H1 (cell line): ENCODE measurements at regions of chr6 and their contacts with region 1.

Region 1: GRCh38 chr6:3732345-3733141 is 19.0 kb downstream of the PXDC1 start:
- DNase-seq: peak in 1 of 2 experiments; percentile 85
- H3K4me3 ChIP-seq: no peak overlapping the region
- H3K27ac ChIP-seq: no peak overlapping the region
- H3K4me1 ChIP-seq: peaks cover 0 to 4% (median 2%) of the 10 kb centered on the region in 4 experiments; a peak in 4 of 7 replicates
- H3K27me3 ChIP-seq: no peaks in the 10 kb centered on the region
- CTCF ChIP-seq: peak; percentile 78 to 96 (median 88)
- EP300 ChIP-seq: no peak
- POLR2A ChIP-seq: no peak
- RAD21 ChIP-seq: peak; percentile 99 to 100

Region 2: GRCh38 chr6:3281631-3282475 is 450.7 kb before region 1 on chr6:
- CTCF ChIA-PET with region 1: interaction called, 58 read pairs
- POLR2A ChIA-PET with region 1: no interaction called
- DNase-seq: peak in 1 of 2 experiments; percentile 21
- H3K4me3 ChIP-seq: peak overlapping the region in 1 of 4 experiments; percentile 12; a peak in 3 of 8 replicates
- H3K27ac ChIP-seq: no peak overlapping the region
- H3K4me1 ChIP-seq: peaks cover 11 to 15% (median 15%) of the 10 kb centered on the region in 4 experiments
- H3K27me3 ChIP-seq: no peaks in the 10 kb centered on the region
- CTCF ChIP-seq: no peak
- EP300 ChIP-seq: no peak
- POLR2A ChIP-seq: no peak
- RAD21 ChIP-seq: no peak

Region 3: GRCh38 chr6:3410385-3411360 is 321.9 kb before region 1 on chr6:
- CTCF ChIA-PET with region 1: interaction called, 23 read pairs
- POLR2A ChIA-PET with region 1: no interaction called
- DNase-seq: peak in 1 of 2 experiments; percentile 92
- H3K4me3 ChIP-seq: no peak overlapping the region
- H3K27ac ChIP-seq: no peak overlapping the region
- H3K4me1 ChIP-seq: peaks cover 0 to 19% (median 16%) of the 10 kb centered on the region in 4 experiments; a peak in 6 of 7 replicates
- H3K27me3 ChIP-seq: no peaks in the 10 kb centered on the region
- CTCF ChIP-seq: peak; percentile 84 to 95 (median 84)
- EP300 ChIP-seq: no peak
- POLR2A ChIP-seq: no peak
- RAD21 ChIP-seq: peak; percentile 83 to 88

Region 4: GRCh38 chr6:3623451-3624249 is 108.9 kb before region 1 on chr6:
- CTCF ChIA-PET with region 1: interaction called, 11 read pairs
- POLR2A ChIA-PET with region 1: no interaction called
- DNase-seq: peak in 1 of 2 experiments; percentile 42
- H3K4me3 ChIP-seq: no peak overlapping the region
- H3K27ac ChIP-seq: no peak overlapping the region
- H3K4me1 ChIP-seq: peaks cover 2 to 15% (median 10%) of the 10 kb centered on the region in 4 experiments
- H3K27me3 ChIP-seq: peaks cover 0 to 2% (median 0%) of the 10 kb centered on the region in 4 experiments; a peak in 2 of 7 replicates
- CTCF ChIP-seq: no peak
- EP300 ChIP-seq: no peak
- POLR2A ChIP-seq: no peak
- RAD21 ChIP-seq: no peak

Region 5: GRCh38 chr6:3721810-3722626 is 10.5 kb before region 1 on chr6:
- CTCF ChIA-PET with region 1: interaction called, 17 read pairs
- POLR2A ChIA-PET with region 1: interaction called, 3 read pairs
- DNase-seq: no peak
- H3K4me3 ChIP-seq: no peak overlapping the region
- H3K27ac ChIP-seq: no peak overlapping the region
- H3K4me1 ChIP-seq: peaks cover 0 to 12% (median 4%) of the 10 kb centered on the region in 4 experiments; a peak in 6 of 7 replicates
- H3K27me3 ChIP-seq: no peaks in the 10 kb centered on the region
- CTCF ChIP-seq: no peak
- EP300 ChIP-seq: no peak
- POLR2A ChIP-seq: no peak
- RAD21 ChIP-seq: no peak

Region 6: DNA sequence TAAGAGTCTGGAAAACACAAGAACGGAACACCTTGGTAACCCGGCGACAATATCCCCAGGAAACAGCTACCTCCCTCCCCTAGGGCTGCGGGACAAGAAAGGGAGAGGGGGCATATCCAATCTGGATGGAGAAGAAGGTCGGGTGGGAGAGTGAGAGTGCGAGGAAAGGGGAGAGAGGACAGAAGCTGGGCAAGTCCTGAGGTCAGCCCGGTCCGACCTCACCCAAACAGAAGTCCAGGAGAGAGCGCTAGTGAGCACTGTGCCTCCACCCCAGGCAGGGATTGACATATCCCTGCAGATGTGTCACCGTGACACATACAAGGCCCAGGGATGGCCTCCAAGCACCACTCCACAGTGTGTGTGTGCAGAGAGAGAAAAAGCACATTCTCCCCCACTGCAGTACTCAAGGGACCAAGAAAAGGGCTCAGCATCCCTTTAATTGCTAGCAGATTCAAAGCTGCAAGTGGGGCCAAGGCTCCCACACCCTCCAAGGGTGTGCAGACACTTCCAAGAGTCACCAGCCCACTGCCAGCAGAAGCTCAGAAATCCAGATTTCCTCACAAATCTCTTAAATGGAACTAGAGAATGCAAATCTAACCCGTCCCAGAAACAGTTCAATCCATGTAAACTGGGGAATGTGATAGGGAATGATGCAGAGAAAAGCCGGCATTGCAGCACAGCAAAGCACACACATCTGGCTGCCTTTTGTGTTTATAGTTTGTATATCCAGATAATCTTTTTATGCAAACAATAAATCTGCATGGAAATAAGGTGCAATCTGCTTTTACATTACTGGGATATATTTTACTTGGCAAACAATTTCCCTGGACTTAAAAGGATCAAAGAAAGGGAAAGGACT is 15.9 kb after region 1 on chr6:
- CTCF ChIA-PET with region 1: interaction called, 14 read pairs
- POLR2A ChIA-PET with region 1: no interaction called
- DNase-seq: peak in 1 of 2 experiments; percentile 81
- H3K4me3 ChIP-seq: no peak overlapping the region
- H3K27ac ChIP-seq: no peak overlapping the region
- H3K4me1 ChIP-seq: peaks cover 0 to 14% (median 5%) of the 10 kb centered on the region in 4 experiments; a peak in 5 of 7 replicates
- H3K27me3 ChIP-seq: peaks cover 12 to 45% (median 39%) of the 10 kb centered on the region in 4 experiments
- CTCF ChIP-seq: peak in 2 of 3 experiments; percentile 79 to 92; a peak in 3 of 4 replicates
- EP300 ChIP-seq: no peak
- POLR2A ChIP-seq: no peak
- RAD21 ChIP-seq: peak; percentile 72 to 80

Region 7: GRCh38 chr6:4155848-4156466 is 423.4 kb after region 1 on chr6:
- CTCF ChIA-PET with region 1: no interaction called
- POLR2A ChIA-PET with region 1: no interaction called
- DNase-seq: peak in 1 of 2 experiments; percentile 82
- H3K4me3 ChIP-seq: no peak overlapping the region
- H3K27ac ChIP-seq: no peak overlapping the region
- H3K4me1 ChIP-seq: no peaks in the 10 kb centered on the region
- H3K27me3 ChIP-seq: no peaks in the 10 kb centered on the region
- CTCF ChIP-seq: peak; percentile 47 to 79 (median 79)
- EP300 ChIP-seq: no peak
- POLR2A ChIP-seq: no peak
- RAD21 ChIP-seq: peak; percentile 84 to 90

Region 8: GRCh38 chr6:5361396-5361795 is 1628.9 kb after region 1 on chr6:
- CTCF ChIA-PET with region 1: no interaction called
- POLR2A ChIA-PET with region 1: no interaction called
- DNase-seq: no peak
- H3K4me3 ChIP-seq: no peak overlapping the region
- H3K27ac ChIP-seq: no peak overlapping the region
- H3K4me1 ChIP-seq: no peaks in the 10 kb centered on the region
- H3K27me3 ChIP-seq: no peaks in the 10 kb centered on the region
- CTCF ChIP-seq: no peak
- EP300 ChIP-seq: no peak
- POLR2A ChIP-seq: no peak
- RAD21 ChIP-seq: no peak